Right lobe of liver (tissue), 6 donors: ENCODE measurements at regions of chr2 and their contacts with region 1.

Region 1: DNA sequence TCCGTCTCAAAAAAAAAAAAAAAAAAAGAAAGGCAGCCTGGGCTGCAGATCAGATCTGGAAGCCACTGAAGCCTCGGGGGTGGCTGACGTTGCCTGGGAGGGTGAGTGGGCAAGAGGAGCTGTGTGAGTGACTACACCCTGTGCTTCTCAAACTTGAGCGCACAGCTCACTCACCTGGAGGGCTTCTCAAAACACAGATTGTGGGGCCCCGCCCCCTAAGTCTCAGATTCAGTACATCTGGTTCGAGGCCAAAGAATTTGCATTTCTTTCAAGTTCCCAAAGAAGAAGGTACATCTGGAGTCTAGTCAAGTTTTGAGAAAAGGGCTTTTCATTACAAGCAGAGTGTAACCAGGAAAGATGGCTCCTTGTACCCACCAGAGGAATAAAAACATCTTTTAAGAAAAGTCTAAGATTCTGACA is 97.7 kb upstream of the CAB39 start:
- DNase-seq: no peak
- ATAC-seq: no peak
- H3K4me3 ChIP-seq: no peak overlapping the region
- H3K27ac ChIP-seq: no peak overlapping the region
- H3K4me1 ChIP-seq: no peaks in the 10 kb centered on the region
- H3K27me3 ChIP-seq: no peaks in the 10 kb centered on the region
- CTCF ChIP-seq: no peak
- POLR2A ChIP-seq: no peak

Region 2: GRCh38 chr2:230000118-230000841 is 614.6 kb before region 1 on chr2:
- intact Hi-C with region 1: loop called in 1 of 2 experiments (anchors 5 kb)
- DNase-seq: no peak
- ATAC-seq: peak in 1 of 4 donors; percentile 45
- H3K4me3 ChIP-seq: no peak overlapping the region
- H3K27ac ChIP-seq: no peak overlapping the region
- H3K4me1 ChIP-seq: no peaks in the 10 kb centered on the region
- H3K27me3 ChIP-seq: no peaks in the 10 kb centered on the region
- CTCF ChIP-seq: no peak
- POLR2A ChIP-seq: no peak